SK-N-SH (cell line): ENCODE measurements at regions of chr9 and their contacts with region 1.

Region 1: DNA sequence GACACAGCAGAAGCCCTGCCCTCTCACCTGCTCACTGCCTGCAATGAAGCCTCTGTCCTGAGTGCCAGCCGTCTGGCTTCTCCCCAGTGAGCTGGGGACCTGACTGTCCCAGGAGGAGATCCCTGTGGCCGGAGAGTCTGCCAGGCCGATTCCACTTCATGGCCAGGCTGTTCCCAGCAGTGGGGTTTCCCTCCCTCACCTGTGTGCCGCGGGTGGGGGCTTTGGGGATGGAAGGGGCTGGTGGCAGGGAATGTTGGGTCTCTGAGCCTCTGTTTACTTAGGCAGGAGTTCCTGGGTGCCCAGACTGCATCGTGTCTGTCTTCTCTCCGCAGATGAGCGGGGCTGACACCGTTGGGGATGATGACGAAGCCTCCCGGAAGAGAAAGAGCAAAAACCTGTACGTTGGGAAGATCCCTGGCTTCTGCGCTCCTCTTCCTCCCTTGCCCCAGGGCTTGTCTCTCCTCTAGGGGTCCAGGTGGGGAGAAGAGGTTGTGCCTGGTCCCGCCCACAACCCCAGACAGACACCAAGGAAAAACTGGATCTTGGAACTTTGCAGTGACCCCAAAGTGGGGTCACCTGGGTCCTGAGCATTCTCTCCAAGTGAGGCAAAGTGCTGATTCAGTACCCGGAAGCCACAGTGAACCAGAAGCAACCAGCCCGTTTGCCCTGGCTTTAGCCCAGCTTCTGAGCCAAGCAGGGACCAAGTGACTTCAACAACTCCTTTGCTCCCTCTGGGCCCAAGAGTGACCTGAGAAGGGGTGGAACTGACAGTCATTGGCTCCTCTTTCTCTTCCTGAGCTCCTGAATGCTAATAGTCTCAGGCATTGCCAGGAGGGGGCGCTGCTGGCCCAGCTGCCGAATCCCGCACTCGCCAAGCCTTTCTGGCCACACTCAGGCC is 127.7 kb downstream of the RGS3 start:
- DNase-seq: peak; percentile 78
- H3K4me3 ChIP-seq: no peak overlapping the region; a peak in 1 of 4 replicates
- H3K27ac ChIP-seq: no peak overlapping the region
- H3K4me1 ChIP-seq: peaks cover 11 to 32% of the 10 kb centered on the region in 2 experiments
- H3K27me3 ChIP-seq: no peaks in the 10 kb centered on the region
- CTCF ChIP-seq: peak; percentile 93
- EP300 ChIP-seq: no peak
- RAD21 ChIP-seq: peak; percentile 99

Region 2: GRCh38 chr9:113275157-113276131 is 315.8 kb before region 1 on chr9 and contains the starts of genes CDC26 and PRPF4:
- CTCF ChIA-PET with region 1: interaction called, 20 read pairs
- POLR2A ChIA-PET with region 1: no interaction called
- DNase-seq: peak; percentile 93
- H3K4me3 ChIP-seq: peak within 1 kb of the TSS; percentile 80 to 95
- H3K27ac ChIP-seq: peak within 1 kb of the TSS; percentile 90
- H3K4me1 ChIP-seq: peaks cover 7 to 12% of the 10 kb centered on the region in 2 experiments; a peak in 3 of 4 replicates
- H3K27me3 ChIP-seq: no peaks in the 10 kb centered on the region
- CTCF ChIP-seq: no peak
- EP300 ChIP-seq: no peak
- RAD21 ChIP-seq: no peak
- polyA plus RNA-seq, gene CDC26: 29.6 and 31.0 TPM in 2 replicates
- polyA plus RNA-seq, gene PRPF4: 22.5 and 23.2 TPM in 2 replicates

Region 3: GRCh38 chr9:113436728-113437471 is 154.3 kb before region 1 on chr9:
- CTCF ChIA-PET with region 1: no interaction called
- POLR2A ChIA-PET with region 1: no interaction called
- DNase-seq: no peak
- H3K4me3 ChIP-seq: no peak overlapping the region
- H3K27ac ChIP-seq: no peak overlapping the region
- H3K4me1 ChIP-seq: no peaks in the 10 kb centered on the region
- H3K27me3 ChIP-seq: peaks cover 8% of the 10 kb centered on the region; the same call in 1 of the 2 replicates
- CTCF ChIP-seq: no peak
- EP300 ChIP-seq: no peak
- RAD21 ChIP-seq: no peak

Region 4: GRCh38 chr9:113454914-113455761 is 136.1 kb before region 1 on chr9:
- CTCF ChIA-PET with region 1: interaction called, 449 read pairs
- POLR2A ChIA-PET with region 1: no interaction called
- DNase-seq: no peak
- H3K4me3 ChIP-seq: no peak overlapping the region
- H3K27ac ChIP-seq: peak overlapping the region; percentile 91 to 92
- H3K4me1 ChIP-seq: peaks cover 7 to 20% of the 10 kb centered on the region in 2 experiments
- H3K27me3 ChIP-seq: no peaks in the 10 kb centered on the region
- CTCF ChIP-seq: no peak
- EP300 ChIP-seq: peak; percentile 9 to 66; a peak in 1 of 4 replicates
- RAD21 ChIP-seq: no peak

Region 5: DNA sequence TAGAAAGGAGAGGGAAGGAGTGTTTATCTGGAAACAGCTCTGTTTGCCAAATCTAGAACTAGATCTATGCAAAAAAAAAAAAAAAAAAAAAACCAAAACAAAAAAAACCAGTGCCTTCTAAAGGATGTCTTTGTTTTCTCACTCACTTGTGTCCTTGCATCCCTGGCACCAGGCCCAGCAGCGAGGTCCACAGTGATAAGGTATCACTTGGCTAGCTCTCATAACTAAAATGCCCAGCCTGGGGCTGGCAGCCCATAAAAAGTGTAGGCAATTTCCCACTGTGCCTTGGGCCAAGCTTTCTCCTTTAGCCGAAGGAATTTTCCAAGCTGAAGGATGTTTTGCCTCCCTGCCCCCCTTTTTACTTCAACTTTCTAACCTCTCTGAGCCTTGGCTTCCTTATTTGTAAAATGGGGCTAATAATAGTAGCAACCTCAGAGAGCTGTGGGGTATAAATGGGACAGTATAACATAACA is 107.0 kb before region 1 on chr9:
- CTCF ChIA-PET with region 1: interaction called, 13 read pairs
- POLR2A ChIA-PET with region 1: no interaction called
- DNase-seq: peak; percentile 74
- H3K4me3 ChIP-seq: no peak overlapping the region
- H3K27ac ChIP-seq: peak overlapping the region; percentile 55 to 84
- H3K4me1 ChIP-seq: peaks cover 14 to 21% of the 10 kb centered on the region in 2 experiments; a peak in 3 of 4 replicates
- H3K27me3 ChIP-seq: no peaks in the 10 kb centered on the region
- CTCF ChIP-seq: no peak
- EP300 ChIP-seq: peak in 1 of 2 experiments; percentile 88; a peak in 2 of 4 replicates
- RAD21 ChIP-seq: peak; percentile 22; the same call in 1 of the 2 replicates

Region 6: DNA sequence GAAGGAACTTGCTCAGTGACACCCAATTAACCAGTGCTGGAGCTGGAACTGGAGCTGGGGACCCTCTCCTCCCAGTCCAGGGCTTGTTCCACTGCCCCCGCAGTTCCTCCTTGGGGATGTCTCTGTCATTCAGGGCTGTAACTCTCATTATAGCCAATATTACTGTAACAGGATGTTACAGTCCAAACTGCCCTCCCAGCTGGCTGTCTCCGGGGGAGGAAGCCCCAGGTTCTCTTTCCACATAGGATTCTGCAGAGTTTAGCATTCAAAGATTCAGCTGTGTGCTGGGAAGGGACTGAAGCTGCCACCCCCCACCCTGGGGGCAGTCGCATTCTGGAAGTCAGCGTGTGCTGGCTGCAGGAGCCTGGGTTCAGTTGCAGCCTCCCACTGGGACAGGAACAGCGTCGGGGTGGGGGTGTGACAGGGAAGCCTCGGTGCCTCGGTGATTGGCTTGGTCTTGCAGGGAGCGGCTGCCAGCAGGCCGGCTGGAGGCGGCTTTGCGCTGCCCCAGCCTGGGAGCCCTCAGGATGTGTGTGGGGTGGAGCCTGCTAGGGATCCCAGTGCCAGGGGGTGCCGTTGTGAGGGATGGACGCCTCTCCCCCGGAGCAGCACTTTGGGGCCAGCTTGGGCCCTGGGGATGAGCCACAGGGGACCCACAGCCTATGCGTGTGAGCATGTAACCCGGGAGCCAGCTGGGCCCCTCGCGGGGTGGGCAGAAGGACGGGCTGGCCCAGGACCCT is 26.6 kb before region 1 on chr9:
- CTCF ChIA-PET with region 1: interaction called, 20 read pairs
- POLR2A ChIA-PET with region 1: no interaction called
- DNase-seq: peak; percentile 69
- H3K4me3 ChIP-seq: no peak overlapping the region
- H3K27ac ChIP-seq: no peak overlapping the region
- H3K4me1 ChIP-seq: peaks cover 0 to 39% of the 10 kb centered on the region in 2 experiments; a peak in 2 of 4 replicates
- H3K27me3 ChIP-seq: no peaks in the 10 kb centered on the region
- CTCF ChIP-seq: no peak
- EP300 ChIP-seq: no peak
- RAD21 ChIP-seq: no peak

Region 7: GRCh38 chr9:113614843-113615648 is 23.8 kb after region 1 on chr9:
- CTCF ChIA-PET with region 1: interaction called, 18 read pairs
- POLR2A ChIA-PET with region 1: interaction called, 6 read pairs
- DNase-seq: no peak
- H3K4me3 ChIP-seq: no peak overlapping the region
- H3K27ac ChIP-seq: peak overlapping the region; percentile 31 to 66; a peak in 2 of 4 replicates
- H3K4me1 ChIP-seq: peaks cover 29 to 45% of the 10 kb centered on the region in 2 experiments
- H3K27me3 ChIP-seq: no peaks in the 10 kb centered on the region
- CTCF ChIP-seq: no peak
- EP300 ChIP-seq: 0 out of 4 replicates have a peak, but pooled peaks of 1 of the 2 experiments have one; percentile 20
- RAD21 ChIP-seq: no peak

Region 8: GRCh38 chr9:113669522-113670115 is 78.4 kb after region 1 on chr9:
- CTCF ChIA-PET with region 1: interaction called, 41 read pairs
- POLR2A ChIA-PET with region 1: no interaction called
- DNase-seq: no peak
- H3K4me3 ChIP-seq: no peak overlapping the region
- H3K27ac ChIP-seq: no peak overlapping the region
- H3K4me1 ChIP-seq: peaks cover 3 to 13% of the 10 kb centered on the region in 2 experiments
- H3K27me3 ChIP-seq: no peaks in the 10 kb centered on the region
- CTCF ChIP-seq: no peak
- EP300 ChIP-seq: no peak
- RAD21 ChIP-seq: no peak

Region 9: DNA sequence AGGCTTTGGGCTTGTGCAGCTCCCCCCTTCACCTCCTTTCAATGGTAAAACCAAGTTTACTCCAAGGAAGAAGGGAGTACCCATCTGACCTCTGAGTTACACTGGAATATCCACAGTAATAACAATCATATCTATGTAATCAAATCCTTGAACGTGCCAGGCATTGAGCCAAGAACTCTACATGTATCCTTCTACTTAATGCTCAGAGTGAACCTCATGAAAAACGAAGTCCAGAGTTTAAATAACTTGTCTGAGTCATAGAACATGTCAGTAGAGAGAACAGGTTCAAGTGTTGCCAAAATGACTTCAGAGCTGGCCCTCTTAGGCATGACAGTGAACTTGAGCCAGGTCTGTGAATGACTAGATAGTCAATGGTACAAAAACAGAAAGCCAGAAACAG is 120.8 kb after region 1 on chr9:
- CTCF ChIA-PET with region 1: no interaction called
- POLR2A ChIA-PET with region 1: no interaction called
- DNase-seq: no peak
- H3K4me3 ChIP-seq: no peak overlapping the region
- H3K27ac ChIP-seq: no peak overlapping the region
- H3K4me1 ChIP-seq: no peaks in the 10 kb centered on the region
- H3K27me3 ChIP-seq: no peaks in the 10 kb centered on the region; the same call in 1 of the 2 replicates
- CTCF ChIP-seq: no peak
- EP300 ChIP-seq: no peak
- RAD21 ChIP-seq: no peak